ENCODE measurements at regions of chr2 and their contacts with region 1.

Region 1: DNA sequence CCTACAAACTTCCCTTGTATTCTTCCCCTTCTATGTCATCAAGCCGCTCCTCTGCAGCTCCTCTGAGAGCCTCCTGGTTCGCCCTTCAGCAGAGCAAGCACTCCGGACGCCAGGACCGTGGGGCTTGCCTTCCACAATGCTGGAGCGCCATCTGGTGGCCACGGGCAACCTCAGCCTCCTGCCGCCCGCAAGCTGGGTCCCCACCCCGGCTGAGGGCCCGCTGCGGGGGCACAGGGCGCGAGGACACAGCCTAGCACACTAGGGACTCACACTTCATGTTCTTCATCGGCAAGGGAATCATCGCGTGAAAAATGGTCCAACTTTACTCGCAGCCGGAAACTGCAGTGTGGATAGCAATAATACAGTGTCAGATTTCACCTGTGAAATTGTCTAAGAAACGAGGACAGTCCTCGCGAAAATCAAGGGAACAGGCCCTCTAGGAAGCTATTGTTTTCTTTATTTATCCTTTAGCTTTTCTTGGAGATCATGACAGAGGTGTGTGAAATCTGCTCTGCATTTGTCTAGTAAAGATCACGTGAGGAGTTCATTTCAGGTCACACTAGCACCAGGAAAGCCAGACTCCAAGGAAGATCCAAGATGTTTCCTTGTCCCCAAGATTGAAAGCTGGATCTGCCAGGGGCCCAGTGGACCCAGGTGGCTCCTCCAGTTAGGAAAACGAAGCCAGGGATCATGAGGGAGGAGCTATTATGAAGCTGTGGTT is 5.8 kb downstream of the PRLH start:
- DNase-seq: peak; percentile 92
- ATAC-seq: peak; percentile 99
- H3K4me3 ChIP-seq: peak overlapping the region; percentile 11; the same call in 1 of the 2 replicates
- H3K27ac ChIP-seq: no peak overlapping the region
- H3K4me1 ChIP-seq: peaks cover 7% of the 10 kb centered on the region; the same call in 1 of the 2 replicates
- H3K27me3 ChIP-seq: no peaks in the 10 kb centered on the region
- CTCF ChIP-seq: peak; percentile 99
- POLR2A ChIP-seq: peak; percentile 52; the same call in 1 of the 2 replicates
- RAD21 ChIP-seq: peak; percentile 100

Region 2: GRCh38 chr2:236512902-236513435 is 1059.2 kb before region 1 on chr2:
- CTCF ChIA-PET with region 1: no interaction called
- POLR2A ChIA-PET with region 1: no interaction called
- dilution Hi-C with region 1: no loop called
- in situ Hi-C with region 1: loop called (anchors 25 kb)
- intact Hi-C with region 1: no loop called
- DNase-seq: peak; percentile 34
- ATAC-seq: peak; percentile 89
- H3K4me3 ChIP-seq: no peak overlapping the region
- H3K27ac ChIP-seq: no peak overlapping the region
- H3K4me1 ChIP-seq: no peaks in the 10 kb centered on the region
- H3K27me3 ChIP-seq: peaks cover 7% of the 10 kb centered on the region
- CTCF ChIP-seq: peak; percentile 55
- POLR2A ChIP-seq: no peak
- RAD21 ChIP-seq: peak; percentile 58

Region 3: GRCh38 chr2:237122214-237122666 is 449.9 kb before region 1 on chr2:
- CTCF ChIA-PET with region 1: interaction called, 4 read pairs
- POLR2A ChIA-PET with region 1: no interaction called
- dilution Hi-C with region 1: no loop called
- in situ Hi-C with region 1: loop called (anchors 5 kb)
- intact Hi-C with region 1: loop called (anchors 1 kb)
- DNase-seq: peak; percentile 87
- ATAC-seq: peak; percentile 94
- H3K4me3 ChIP-seq: no peak overlapping the region
- H3K27ac ChIP-seq: peak overlapping the region; percentile 53; the same call in 1 of the 2 replicates
- H3K4me1 ChIP-seq: peaks cover 13% of the 10 kb centered on the region
- H3K27me3 ChIP-seq: no peaks in the 10 kb centered on the region
- CTCF ChIP-seq: peak; percentile 84
- POLR2A ChIP-seq: 0 out of 2 replicates have a peak, but pooled peaks have one; percentile 34
- RAD21 ChIP-seq: peak; percentile 93

Region 4: DNA sequence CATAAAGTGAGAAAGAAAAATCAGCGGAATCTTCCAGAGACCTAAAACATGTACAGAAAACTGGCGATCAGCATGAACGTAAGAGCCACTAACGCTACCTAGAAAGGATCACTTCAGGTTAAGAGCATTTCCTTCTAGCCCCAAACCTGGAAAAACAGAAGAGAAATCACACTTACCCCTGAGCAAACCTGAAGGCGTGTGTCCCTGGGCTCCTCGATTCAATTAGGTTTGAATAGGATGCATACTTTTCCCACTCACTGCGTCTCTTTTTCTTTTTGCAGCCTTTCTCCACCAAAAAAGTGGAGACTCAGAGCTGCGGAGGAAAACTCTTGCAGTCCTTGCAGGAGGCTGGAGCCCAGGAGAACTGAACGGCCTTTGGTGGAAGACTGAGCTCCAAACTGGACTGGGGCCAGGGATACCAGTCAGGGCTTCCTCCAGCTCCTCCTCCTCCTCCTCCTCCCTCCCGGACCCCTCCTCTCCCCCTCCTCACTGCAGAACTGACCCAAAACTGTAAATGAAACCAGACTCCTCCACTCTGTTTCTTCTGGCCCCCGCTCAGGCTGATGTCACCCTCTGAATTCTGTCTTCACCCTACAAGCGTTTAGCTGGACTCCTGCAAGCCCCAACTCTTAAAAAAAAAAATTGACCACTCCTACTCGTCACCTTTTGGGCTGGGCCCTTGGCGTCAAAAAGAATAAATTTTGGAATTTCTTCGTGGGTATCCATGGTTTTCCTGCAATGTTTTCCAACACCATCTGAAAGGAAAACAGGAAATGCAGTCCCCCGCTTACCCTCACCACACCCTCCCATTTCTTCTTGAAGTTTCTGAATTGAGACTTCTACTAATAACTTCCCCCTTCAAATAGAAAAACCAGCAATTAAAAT is 158.2 kb before region 1 on chr2 and contains the start of gene COL6A3:
- CTCF ChIA-PET with region 1: interaction called, 5 read pairs
- POLR2A ChIA-PET with region 1: interaction called, 3 read pairs
- dilution Hi-C with region 1: no loop called
- in situ Hi-C with region 1: loop called (anchors 10 kb)
- intact Hi-C with region 1: no loop called
- DNase-seq: peak; percentile 98
- ATAC-seq: peak; percentile 78
- H3K4me3 ChIP-seq: peak within 1 kb of the TSS; percentile 96
- H3K27ac ChIP-seq: peak within 1 kb of the TSS; percentile 89
- H3K4me1 ChIP-seq: no peaks in the 10 kb centered on the region
- H3K27me3 ChIP-seq: no peaks in the 10 kb centered on the region
- CTCF ChIP-seq: no peak
- POLR2A ChIP-seq: peak; percentile 98
- RAD21 ChIP-seq: peak; percentile 3; the same call in 1 of the 2 replicates
- total RNA-seq, gene COL6A3: 1,501 and 1,855 TPM in 2 replicates

Region 5: GRCh38 chr2:237474931-237475703 is 97.1 kb before region 1 on chr2:
- CTCF ChIA-PET with region 1: interaction called, 14 read pairs
- POLR2A ChIA-PET with region 1: no interaction called
- dilution Hi-C with region 1: no loop called
- in situ Hi-C with region 1: no loop called
- intact Hi-C with region 1: loop called (anchors 1 kb)
- DNase-seq: peak; percentile 77
- ATAC-seq: peak; percentile 93
- H3K4me3 ChIP-seq: peak overlapping the region; percentile 43
- H3K27ac ChIP-seq: peak overlapping the region; percentile 95
- H3K4me1 ChIP-seq: peaks cover 20% of the 10 kb centered on the region
- H3K27me3 ChIP-seq: no peaks in the 10 kb centered on the region
- CTCF ChIP-seq: peak; percentile 85
- POLR2A ChIP-seq: peak; percentile 51
- RAD21 ChIP-seq: peak; percentile 71

Region 6: GRCh38 chr2:237512774-237513466 is 59.3 kb before region 1 on chr2:
- CTCF ChIA-PET with region 1: interaction called, 53 read pairs
- POLR2A ChIA-PET with region 1: no interaction called
- dilution Hi-C with region 1: no loop called
- in situ Hi-C with region 1: no loop called
- intact Hi-C with region 1: loop called (anchors 1 kb)
- DNase-seq: peak; percentile 85
- ATAC-seq: peak; percentile 91
- H3K4me3 ChIP-seq: no peak overlapping the region
- H3K27ac ChIP-seq: no peak overlapping the region
- H3K4me1 ChIP-seq: peaks cover 18% of the 10 kb centered on the region; the same call in 1 of the 2 replicates
- H3K27me3 ChIP-seq: no peaks in the 10 kb centered on the region
- CTCF ChIP-seq: peak; percentile 98
- POLR2A ChIP-seq: no peak
- RAD21 ChIP-seq: peak; percentile 89

Region 7: GRCh38 chr2:237526891-237527632 is 45.1 kb before region 1 on chr2:
- CTCF ChIA-PET with region 1: no interaction called
- POLR2A ChIA-PET with region 1: no interaction called
- dilution Hi-C with region 1: no loop called
- in situ Hi-C with region 1: no loop called
- intact Hi-C with region 1: no loop called
- DNase-seq: no peak
- ATAC-seq: no peak
- H3K4me3 ChIP-seq: no peak overlapping the region
- H3K27ac ChIP-seq: no peak overlapping the region
- H3K4me1 ChIP-seq: no peaks in the 10 kb centered on the region
- H3K27me3 ChIP-seq: no peaks in the 10 kb centered on the region
- CTCF ChIP-seq: no peak
- POLR2A ChIP-seq: no peak
- RAD21 ChIP-seq: no peak

Region 8: GRCh38 chr2:237691908-237692600 is 119.9 kb after region 1 on chr2:
- CTCF ChIA-PET with region 1: no interaction called
- POLR2A ChIA-PET with region 1: no interaction called
- dilution Hi-C with region 1: no loop called
- in situ Hi-C with region 1: no loop called
- intact Hi-C with region 1: no loop called
- DNase-seq: peak; percentile 80
- ATAC-seq: peak; percentile 76
- H3K4me3 ChIP-seq: peak overlapping the region; percentile 57
- H3K27ac ChIP-seq: peak overlapping the region; percentile 81
- H3K4me1 ChIP-seq: peaks cover 30% of the 10 kb centered on the region
- H3K27me3 ChIP-seq: no peaks in the 10 kb centered on the region
- CTCF ChIP-seq: no peak
- POLR2A ChIP-seq: peak; percentile 89
- RAD21 ChIP-seq: no peak

Measured in IMR-90 (cell line).